ENCODE measurements at regions of chr22 and their contacts with region 1.

Region 1: DNA sequence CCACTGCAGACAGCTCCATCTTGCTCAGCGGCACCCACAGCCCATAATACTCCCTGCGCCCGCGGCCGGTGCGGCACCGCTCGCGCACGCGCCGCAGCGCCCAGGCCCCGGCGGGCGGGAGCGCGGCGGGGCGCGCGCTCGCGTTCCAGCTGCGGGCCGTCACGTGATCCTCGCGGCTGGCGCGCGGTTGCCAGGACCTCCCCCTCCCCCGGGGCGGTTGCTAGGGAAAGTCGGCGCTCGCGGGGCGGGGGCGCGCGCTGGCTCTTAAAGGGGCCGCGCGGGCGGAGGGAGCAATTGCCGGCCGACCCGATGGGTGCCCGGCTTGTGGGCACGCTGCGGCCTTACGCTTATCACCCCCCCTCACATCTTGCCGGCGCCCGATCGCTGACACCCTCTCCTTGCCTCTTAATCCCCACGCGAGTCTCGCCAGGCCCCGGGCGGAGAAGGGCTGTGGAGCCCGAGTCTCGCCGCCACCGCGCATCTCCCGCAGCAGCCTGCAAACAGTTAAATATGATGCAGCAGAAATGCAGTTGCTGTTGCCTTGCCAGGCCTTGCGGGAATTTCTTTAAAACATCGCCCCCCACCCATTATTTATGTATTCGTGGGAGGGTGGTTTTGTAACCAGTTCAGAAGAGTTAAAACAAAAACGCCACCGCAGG is at the start of gene CBX6:
- DNase-seq: peak; percentile 96 to 99 (median 97)
- ATAC-seq: peak; percentile 56 to 90 (median 86)
- H3K4me3 ChIP-seq: peak within 1 kb of the TSS; percentile 65 to 98 (median 81)
- H3K27ac ChIP-seq: peak within 1 kb of the TSS; percentile 81 to 99 (median 97)
- H3K4me1 ChIP-seq: peaks cover 0 to 48% (median 37%) of the 10 kb centered on the region in 12 donors
- H3K27me3 ChIP-seq: no peaks in the 10 kb centered on the region
- CTCF ChIP-seq: peak in 1 of 12 donors; percentile 2
- POLR2A ChIP-seq: peak in 1 of 2 donors; percentile 58
- total RNA-seq, gene CBX6: 28.3 to 59.0 (median 43.9) TPM

Region 2: GRCh38 chr22:38793721-38794466 is 78.4 kb before region 1 on chr22 and contains the start of gene DNAL4:
- intact Hi-C with region 1: loop called in 1 of 10 experiments (anchors 5 kb)
- DNase-seq: peak; percentile 93 to 98 (median 95)
- ATAC-seq: peak; percentile 97 to 98 (median 97)
- H3K4me3 ChIP-seq: peak within 1 kb of the TSS; percentile 64 to 94 (median 86)
- H3K27ac ChIP-seq: peak within 1 kb of the TSS; percentile 76 to 93 (median 85)
- H3K4me1 ChIP-seq: peaks cover 0 to 26% (median 18%) of the 10 kb centered on the region in 12 donors
- H3K27me3 ChIP-seq: no peaks in the 10 kb centered on the region
- CTCF ChIP-seq: no peak
- POLR2A ChIP-seq: peak in 1 of 2 donors; percentile 66
- total RNA-seq, gene DNAL4: 8.2 to 16.4 (median 10.4) TPM

Region 3: DNA sequence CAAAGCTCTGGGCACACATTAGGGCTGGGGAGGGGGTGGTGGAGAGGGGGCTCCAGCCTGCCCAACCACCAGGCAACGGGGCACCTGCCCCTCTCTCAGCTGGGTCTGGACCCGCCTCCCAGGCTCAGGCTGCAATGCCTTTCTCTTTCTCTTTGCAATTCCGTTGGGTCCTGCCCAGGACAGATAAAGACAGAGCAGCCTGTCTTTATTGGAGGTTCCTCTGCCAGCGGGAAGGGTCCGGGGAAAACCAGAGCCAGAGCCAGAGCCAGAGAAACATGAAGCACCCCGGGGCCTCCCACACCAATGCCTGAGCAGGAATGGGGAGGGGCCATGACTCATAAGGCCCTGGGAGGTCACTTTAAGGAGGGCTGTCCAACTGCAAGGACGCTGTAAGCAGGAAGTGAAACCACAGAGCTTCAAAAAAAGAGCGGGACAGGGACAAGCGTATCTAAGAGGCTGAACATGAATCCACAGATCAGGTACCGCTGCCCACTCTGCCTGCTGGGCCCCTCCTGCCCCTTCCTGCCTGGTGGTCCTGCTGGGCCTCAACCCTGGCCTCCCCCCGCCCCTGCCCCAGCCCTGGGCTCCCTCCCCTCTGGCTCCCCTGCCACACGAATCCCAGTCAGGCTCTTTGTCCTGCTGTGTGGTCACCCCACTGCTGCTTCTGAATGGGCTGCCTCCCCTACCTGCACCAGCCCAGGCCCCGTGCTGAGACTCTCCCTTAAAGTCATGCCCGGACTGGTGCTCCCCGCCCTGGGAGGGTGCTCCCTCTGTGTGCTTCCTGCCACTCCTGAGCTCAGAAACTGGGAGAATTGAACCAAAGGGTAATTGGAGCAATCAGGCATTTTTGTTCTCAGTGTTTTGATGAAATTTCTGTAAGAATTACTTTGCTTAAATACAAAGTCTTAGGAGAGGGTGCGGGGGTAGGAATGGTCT is 110.0 kb after region 1 on chr22 and contains the start of gene APOBEC3B:
- intact Hi-C with region 1: loop called in 2 of 10 experiments (anchors 5 kb)
- DNase-seq: peak; percentile 67 to 90 (median 86)
- ATAC-seq: peak; percentile 97 to 99 (median 99)
- H3K4me3 ChIP-seq: peak within 1 kb of the TSS in 11 of 12 donors; percentile 7 to 62 (median 49)
- H3K27ac ChIP-seq: peak within 1 kb of the TSS in 7 of 12 donors; percentile 2 to 78 (median 46)
- H3K4me1 ChIP-seq: peaks cover 0 to 18% (median 10%) of the 10 kb centered on the region in 12 donors
- H3K27me3 ChIP-seq: no peaks in the 10 kb centered on the region
- CTCF ChIP-seq: no peak
- POLR2A ChIP-seq: no peak
- total RNA-seq, gene APOBEC3B: 0.49 to 10.3 (median 1.1) TPM in 7 of 9 donors, not detected in the others

Region 4: GRCh38 chr22:39117585-39118191 is 245.4 kb after region 1 on chr22:
- intact Hi-C with region 1: loop called in 9 of 10 experiments (anchors 2 to 10 kb)
- DNase-seq: peak in 2 of 5 donors; percentile 51 to 52
- ATAC-seq: no peak
- H3K4me3 ChIP-seq: peak overlapping the region in 1 of 12 donors; percentile 8
- H3K27ac ChIP-seq: peak overlapping the region in 1 of 12 donors; percentile 62
- H3K4me1 ChIP-seq: peaks cover 0 to 12% (median 0%) of the 10 kb centered on the region in 12 donors
- H3K27me3 ChIP-seq: peaks cover 0 to 28% (median 6%) of the 10 kb centered on the region in 9 donors
- CTCF ChIP-seq: peak in 10 of 12 donors; percentile 21 to 55 (median 40)
- POLR2A ChIP-seq: no peak

Region 5: GRCh38 chr22:39135090-39135896 is 263.0 kb after region 1 on chr22:
- intact Hi-C with region 1: loop called in 1 of 10 experiments (anchors 5 kb)
- DNase-seq: peak; percentile 49 to 82 (median 68)
- ATAC-seq: peak in 3 of 4 donors; percentile 66 to 75 (median 73)
- H3K4me3 ChIP-seq: no peak overlapping the region
- H3K27ac ChIP-seq: peak overlapping the region in 1 of 12 donors; percentile 57
- H3K4me1 ChIP-seq: peaks cover 0 to 32% (median 15%) of the 10 kb centered on the region in 12 donors
- H3K27me3 ChIP-seq: no peaks in the 10 kb centered on the region
- CTCF ChIP-seq: peak in 11 of 12 donors; percentile 24 to 67 (median 44)
- POLR2A ChIP-seq: no peak